ENCODE measurements at regions of chr2 and their contacts with region 1.

Region 1: DNA sequence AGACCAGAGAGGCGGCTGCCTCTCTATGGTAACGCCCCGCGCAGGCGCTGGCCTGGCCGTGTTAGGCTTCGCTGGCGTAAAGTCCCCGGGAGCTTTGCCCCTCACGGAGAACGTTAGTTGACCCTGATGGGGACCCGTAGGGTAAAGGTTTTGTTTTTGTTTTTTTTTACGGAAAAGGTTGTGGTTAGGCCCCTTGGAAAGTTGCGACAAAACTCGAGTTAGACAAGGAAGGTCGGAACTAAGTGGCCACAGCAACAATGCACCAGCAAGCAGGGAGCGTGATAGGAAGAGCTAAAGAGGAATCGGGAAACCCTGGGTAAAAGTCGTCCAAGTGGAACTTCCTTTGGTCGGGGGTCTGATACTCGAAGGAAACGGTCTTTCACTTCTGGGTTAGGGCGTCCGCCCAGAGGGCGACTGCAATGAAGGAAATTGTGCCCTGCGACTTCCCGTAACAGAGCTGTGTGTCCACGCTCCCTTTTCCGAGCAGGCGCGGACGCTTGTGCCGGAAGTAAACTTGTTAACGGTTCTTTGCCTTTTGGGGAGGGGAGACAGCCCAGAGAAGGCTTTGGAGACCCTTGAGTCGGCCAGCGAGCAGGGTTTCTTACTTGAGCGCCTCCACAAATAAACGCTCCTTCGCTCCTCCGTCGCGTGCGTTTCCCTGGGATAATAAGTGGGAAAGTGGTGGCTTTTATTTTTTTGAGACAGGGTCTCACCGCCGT is 493 bp upstream of the CLASP1 start:
- DNase-seq: peak; percentile 89 to 99 (median 97)
- ATAC-seq: peak; percentile 97
- H3K4me3 ChIP-seq: peak overlapping the region; percentile 88
- H3K4me3 Mint-ChIP-seq: peak overlapping the region; percentile 92 to 100 (median 98)
- H3K27ac ChIP-seq: peak overlapping the region; percentile 90
- H3K27ac Mint-ChIP-seq: peak overlapping the region; percentile 98 to 100 (median 99)
- H3K4me1 ChIP-seq: peaks cover 10 to 11% of the 10 kb centered on the region in 2 donors
- H3K4me1 Mint-ChIP-seq: peaks cover 54 to 88% (median 76%) of the 10 kb centered on the region in 7 donors
- H3K27me3 ChIP-seq: no peaks in the 10 kb centered on the region
- H3K27me3 Mint-ChIP-seq: peaks cover 0 to 2% (median 0%) of the 10 kb centered on the region in 5 donors

Region 2: GRCh38 chr2:119694845-119695521 is 1954.8 kb before region 1 on chr2:
- CTCF ChIA-PET with region 1: no interaction called
- POLR2A ChIA-PET with region 1: no interaction called
- intact Hi-C with region 1: loop called in 1 of 2 experiments (anchors 5 kb)
- DNase-seq: peak in 7 of 9 donors; percentile 62 to 79 (median 72)
- ATAC-seq: peak; percentile 74
- H3K4me3 ChIP-seq: peak overlapping the region; percentile 53
- H3K4me3 Mint-ChIP-seq: peak overlapping the region in 9 of 10 donors; percentile 74 to 91 (median 89)
- H3K27ac ChIP-seq: peak overlapping the region; percentile 56
- H3K27ac Mint-ChIP-seq: peak overlapping the region in 8 of 9 donors; percentile 83 to 97 (median 92)
- H3K4me1 ChIP-seq: peaks cover 0 to 50% of the 10 kb centered on the region in 2 donors
- H3K4me1 Mint-ChIP-seq: peaks cover 17 to 60% (median 55%) of the 10 kb centered on the region in 7 donors
- H3K27me3 ChIP-seq: no peaks in the 10 kb centered on the region
- H3K27me3 Mint-ChIP-seq: no peaks in the 10 kb centered on the region

Region 3: GRCh38 chr2:121333834-121334558 is 315.8 kb before region 1 on chr2:
- CTCF ChIA-PET with region 1: no interaction called
- POLR2A ChIA-PET with region 1: no interaction called
- intact Hi-C with region 1: no loop called
- DNase-seq: no peak
- ATAC-seq: no peak
- H3K4me3 ChIP-seq: no peak overlapping the region
- H3K4me3 Mint-ChIP-seq: no peak overlapping the region
- H3K27ac ChIP-seq: no peak overlapping the region
- H3K27ac Mint-ChIP-seq: no peak overlapping the region
- H3K4me1 ChIP-seq: no peaks in the 10 kb centered on the region
- H3K4me1 Mint-ChIP-seq: peaks cover 0 to 6% (median 0%) of the 10 kb centered on the region in 7 donors
- H3K27me3 ChIP-seq: no peaks in the 10 kb centered on the region
- H3K27me3 Mint-ChIP-seq: peaks cover 0 to 6% (median 0%) of the 10 kb centered on the region in 5 donors

Region 4: GRCh38 chr2:121596221-121597080 is 53.3 kb before region 1 on chr2:
- CTCF ChIA-PET with region 1: no interaction called
- POLR2A ChIA-PET with region 1: interaction called, 5 read pairs
- intact Hi-C with region 1: loop called (anchors 1 kb)
- DNase-seq: peak in 4 of 9 donors; percentile 9 to 17 (median 14)
- ATAC-seq: peak; percentile 95
- H3K4me3 ChIP-seq: no peak overlapping the region
- H3K4me3 Mint-ChIP-seq: peak overlapping the region; percentile 51 to 90 (median 77)
- H3K27ac ChIP-seq: peak overlapping the region; percentile 55
- H3K27ac Mint-ChIP-seq: peak overlapping the region; percentile 33 to 96 (median 83)
- H3K4me1 ChIP-seq: peaks cover 9 to 14% of the 10 kb centered on the region in 2 donors
- H3K4me1 Mint-ChIP-seq: peaks cover 30 to 66% (median 59%) of the 10 kb centered on the region in 7 donors
- H3K27me3 ChIP-seq: no peaks in the 10 kb centered on the region
- H3K27me3 Mint-ChIP-seq: no peaks in the 10 kb centered on the region

Region 5: DNA sequence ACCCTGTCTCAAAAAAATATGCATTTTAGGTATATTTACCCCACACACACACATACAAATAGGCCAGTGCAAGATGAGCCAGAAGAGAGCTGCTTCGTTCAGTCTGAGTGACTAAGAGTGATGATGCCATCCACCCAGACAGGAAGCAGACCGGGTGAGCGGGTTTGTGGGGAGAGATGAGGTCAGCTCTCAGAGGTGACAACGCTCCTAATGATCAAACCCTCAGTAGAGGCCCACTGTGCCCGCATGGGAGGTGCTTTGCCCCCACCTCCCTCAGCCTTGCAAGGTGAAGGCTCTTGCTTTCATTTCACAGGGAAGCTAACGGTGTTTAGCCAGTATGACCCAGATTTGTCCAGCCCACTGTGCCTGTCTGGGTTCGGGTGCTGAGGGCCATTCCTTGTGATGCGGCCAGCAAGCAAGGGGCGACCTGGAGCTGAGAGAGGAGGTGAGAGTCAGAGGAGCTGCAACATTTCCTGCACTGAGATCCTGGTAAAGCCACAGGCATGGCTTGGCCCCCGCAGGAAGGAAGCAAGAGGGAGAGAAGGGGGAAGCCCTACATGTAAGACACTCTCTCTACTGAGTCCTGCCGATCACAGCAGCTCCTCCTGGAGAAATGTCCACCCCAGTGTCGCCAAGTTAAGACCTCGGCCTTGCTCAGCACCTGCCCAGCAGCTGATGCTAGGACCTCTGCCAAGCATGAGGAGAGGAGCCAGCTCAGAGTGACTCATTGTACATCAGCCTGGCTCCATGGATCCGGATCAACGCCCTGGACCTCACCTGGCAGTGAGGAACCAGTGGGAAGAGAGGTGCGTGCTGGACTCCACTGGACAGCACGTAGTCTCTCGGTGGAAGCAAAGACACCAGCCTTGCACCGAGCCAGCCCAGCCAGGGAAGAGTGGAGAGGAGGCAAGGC is 49.9 kb after region 1 on chr2:
- CTCF ChIA-PET with region 1: interaction called, 3 read pairs
- POLR2A ChIA-PET with region 1: interaction called, 9 read pairs
- intact Hi-C with region 1: loop called (anchors 1 kb)
- DNase-seq: peak; percentile 32 to 80 (median 56)
- ATAC-seq: peak; percentile 98
- H3K4me3 ChIP-seq: peak overlapping the region; percentile 12
- H3K4me3 Mint-ChIP-seq: peak overlapping the region; percentile 73 to 92 (median 82)
- H3K27ac ChIP-seq: no peak overlapping the region
- H3K27ac Mint-ChIP-seq: peak overlapping the region; percentile 73 to 96 (median 90)
- H3K4me1 ChIP-seq: peaks cover 13 to 31% of the 10 kb centered on the region in 2 donors
- H3K4me1 Mint-ChIP-seq: peaks cover 13 to 46% (median 24%) of the 10 kb centered on the region in 7 donors
- H3K27me3 ChIP-seq: no peaks in the 10 kb centered on the region
- H3K27me3 Mint-ChIP-seq: no peaks in the 10 kb centered on the region

Region 6: DNA sequence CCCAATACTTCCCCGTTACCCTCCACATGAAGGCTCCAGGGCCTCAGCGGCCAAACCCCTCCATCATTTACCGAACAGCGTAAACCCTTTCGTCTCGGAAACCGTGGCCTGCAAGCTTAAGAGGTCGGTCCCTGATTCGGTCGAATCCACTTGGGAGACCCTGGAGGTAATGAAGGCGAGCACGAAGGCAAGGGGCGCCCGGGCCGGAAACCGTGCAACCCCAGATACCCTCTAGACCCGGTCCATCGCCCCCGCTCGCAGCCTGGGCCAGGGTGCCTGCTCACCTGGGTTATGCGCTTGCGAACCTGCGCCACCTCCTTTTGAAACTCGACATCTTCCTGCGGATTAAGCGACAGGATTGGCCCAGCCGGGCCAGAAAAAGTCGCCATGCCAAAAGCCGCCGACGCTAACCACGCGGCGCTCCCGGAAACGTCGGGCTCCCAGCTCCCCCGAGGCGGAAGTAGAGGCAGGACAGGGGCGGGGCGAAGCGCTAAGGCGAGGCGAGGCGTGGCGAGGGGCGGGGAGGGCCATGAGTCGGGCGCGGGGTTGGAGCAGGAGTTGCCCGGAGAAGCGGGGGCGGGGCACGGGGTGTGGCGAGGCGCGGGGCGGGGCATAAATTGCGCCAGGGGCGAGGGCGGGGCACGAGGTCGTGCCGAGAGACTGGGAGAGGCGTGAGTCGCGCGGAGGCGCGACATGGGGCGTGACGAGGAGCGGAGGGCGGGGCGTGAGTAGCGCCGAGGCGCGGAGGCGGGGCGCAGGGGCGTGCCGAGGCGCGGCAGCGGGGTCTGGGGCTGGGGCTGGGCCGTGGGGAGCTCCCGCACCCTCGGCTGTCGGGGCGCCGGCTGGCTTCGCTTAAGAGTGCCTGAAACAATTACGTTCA is 86.9 kb after region 1 on chr2 and contains the start of gene NIFK:
- CTCF ChIA-PET with region 1: interaction called, 7 read pairs
- POLR2A ChIA-PET with region 1: interaction called, 61 read pairs
- intact Hi-C with region 1: loop called (anchors 1 kb)
- DNase-seq: peak; percentile 98 to 100 (median 99)
- ATAC-seq: peak; percentile 96
- H3K4me3 ChIP-seq: peak within 1 kb of the TSS; percentile 80
- H3K4me3 Mint-ChIP-seq: peak within 1 kb of the TSS; percentile 81 to 99 (median 95)
- H3K27ac ChIP-seq: peak within 1 kb of the TSS; percentile 89
- H3K27ac Mint-ChIP-seq: peak within 1 kb of the TSS; percentile 85 to 99 (median 97)
- H3K4me1 ChIP-seq: peaks cover 13 to 19% of the 10 kb centered on the region in 2 donors
- H3K4me1 Mint-ChIP-seq: peaks cover 17 to 54% (median 38%) of the 10 kb centered on the region in 7 donors
- H3K27me3 ChIP-seq: no peaks in the 10 kb centered on the region
- H3K27me3 Mint-ChIP-seq: no peaks in the 10 kb centered on the region
- total RNA-seq, gene NIFK: 35.3 to 88.1 (median 71.9) TPM

Region 7: DNA sequence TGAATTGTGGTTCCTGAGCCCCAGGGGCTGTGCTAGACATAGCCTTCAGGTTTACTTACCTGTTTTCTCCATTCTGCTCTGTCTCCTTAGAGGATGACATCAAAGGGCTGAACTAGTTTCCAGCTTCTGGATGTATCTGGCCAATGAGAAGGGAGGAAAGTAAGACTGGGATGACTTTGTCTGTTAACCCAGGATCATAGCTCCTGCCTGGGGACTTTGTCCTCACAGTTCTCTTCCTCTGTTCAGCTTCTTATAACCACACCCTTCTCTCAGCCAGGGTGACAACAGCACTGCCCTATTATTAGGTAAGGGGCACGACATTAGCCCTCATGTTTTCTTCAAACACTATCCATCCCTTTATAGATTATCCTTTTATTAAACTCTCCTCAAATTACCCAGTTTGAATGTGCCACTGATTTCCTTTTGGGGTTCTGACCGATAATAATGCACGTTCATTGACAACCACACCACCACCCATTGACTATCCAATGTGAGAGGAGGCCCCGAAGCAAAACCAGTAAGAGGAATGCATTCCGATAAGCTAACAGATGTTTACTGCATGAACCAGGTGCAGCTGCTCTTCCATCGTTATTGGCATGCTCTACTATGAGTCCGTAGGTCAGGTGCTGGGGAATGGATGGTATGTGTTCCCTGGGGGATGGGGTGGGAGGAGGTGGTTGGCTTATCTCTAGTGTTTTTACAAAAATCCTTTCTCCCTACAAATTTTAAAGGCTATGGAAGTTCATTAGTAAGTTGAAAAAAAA is 129.2 kb after region 1 on chr2:
- CTCF ChIA-PET with region 1: no interaction called
- POLR2A ChIA-PET with region 1: no interaction called
- intact Hi-C with region 1: no loop called
- DNase-seq: no peak
- ATAC-seq: no peak
- H3K4me3 ChIP-seq: no peak overlapping the region
- H3K4me3 Mint-ChIP-seq: no peak overlapping the region
- H3K27ac ChIP-seq: no peak overlapping the region
- H3K27ac Mint-ChIP-seq: no peak overlapping the region
- H3K4me1 ChIP-seq: no peaks in the 10 kb centered on the region
- H3K4me1 Mint-ChIP-seq: peaks cover 0 to 3% (median 0%) of the 10 kb centered on the region in 7 donors
- H3K27me3 ChIP-seq: no peaks in the 10 kb centered on the region
- H3K27me3 Mint-ChIP-seq: peaks cover 0 to 14% (median 0%) of the 10 kb centered on the region in 5 donors

Region 8: DNA sequence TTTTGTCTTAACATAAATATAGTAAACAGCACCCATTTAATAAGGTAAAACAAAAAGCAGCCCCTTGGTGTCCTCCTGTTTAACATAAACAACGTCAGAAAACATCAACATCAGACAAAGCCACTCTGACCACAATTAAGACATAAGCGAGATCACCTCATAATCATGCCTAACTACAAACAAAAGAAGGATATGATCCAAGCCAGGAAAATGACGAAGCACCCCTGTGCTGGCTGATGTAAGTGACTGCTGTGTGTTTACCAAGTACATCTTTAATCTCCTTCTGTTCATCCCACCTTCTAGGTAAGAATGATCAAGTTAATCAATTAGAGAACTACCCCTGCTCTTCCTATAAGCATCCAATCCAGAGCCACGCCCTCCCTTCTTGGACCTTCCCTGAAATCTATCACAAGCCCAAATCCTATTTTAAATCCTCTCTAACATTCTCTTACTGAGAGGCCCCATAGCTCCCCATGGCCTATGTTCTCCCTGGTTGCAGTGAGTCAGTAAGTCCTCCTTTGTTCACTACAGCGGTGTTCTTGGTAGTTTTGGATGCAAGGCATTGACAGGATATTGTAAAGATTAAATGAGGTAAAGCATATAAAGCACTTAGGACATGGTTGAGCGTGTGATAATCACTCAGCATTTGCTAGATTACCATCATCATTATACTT is 529.9 kb after region 1 on chr2:
- CTCF ChIA-PET with region 1: no interaction called
- POLR2A ChIA-PET with region 1: no interaction called
- intact Hi-C with region 1: no loop called
- DNase-seq: no peak
- ATAC-seq: no peak
- H3K4me3 ChIP-seq: no peak overlapping the region
- H3K4me3 Mint-ChIP-seq: no peak overlapping the region
- H3K27ac ChIP-seq: no peak overlapping the region
- H3K27ac Mint-ChIP-seq: no peak overlapping the region
- H3K4me1 ChIP-seq: no peaks in the 10 kb centered on the region
- H3K4me1 Mint-ChIP-seq: peaks cover 0 to 3% (median 0%) of the 10 kb centered on the region in 7 donors
- H3K27me3 ChIP-seq: no peaks in the 10 kb centered on the region
- H3K27me3 Mint-ChIP-seq: peaks cover 0 to 8% (median 0%) of the 10 kb centered on the region in 5 donors